ENCODE measurements at regions of chr12 and their contacts with region 1.

Region 1: DNA sequence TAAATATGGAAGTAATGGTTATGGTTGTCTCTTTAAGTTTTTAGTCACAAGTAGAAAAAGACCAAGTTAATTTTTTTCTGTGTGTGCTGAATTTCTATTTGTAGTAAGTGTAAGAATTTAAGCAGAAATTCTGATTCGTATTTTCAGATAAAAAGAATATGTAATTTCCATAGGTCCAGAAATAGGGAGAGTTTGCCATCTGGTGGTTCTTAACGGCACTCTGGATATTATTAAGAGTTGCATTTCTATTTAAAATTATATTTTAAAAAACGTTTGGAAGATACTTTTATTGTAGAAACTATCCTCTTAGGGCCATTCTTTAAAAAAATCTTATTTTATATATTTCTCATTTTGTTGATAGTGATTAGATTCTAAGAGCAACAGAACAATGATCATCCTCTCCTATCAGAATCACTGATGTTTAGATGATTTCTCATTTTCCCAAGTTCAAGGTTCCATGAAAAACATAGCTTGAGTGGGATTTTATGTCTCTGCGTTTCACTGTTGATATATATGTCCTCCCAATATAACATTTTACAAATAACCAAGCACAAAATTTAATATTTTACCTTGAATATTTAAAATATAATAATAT is 88.3 kb downstream of the LRRK2 start:
- DNase-seq: no peak
- CTCF ChIP-seq: peak; percentile 37

Region 2: GRCh38 chr12:40010899-40011774 is 301.9 kb before region 1 on chr12:
- in situ Hi-C with region 1: loop called (anchors 25 kb)
- DNase-seq: peak; percentile 44
- CTCF ChIP-seq: peak; percentile 86

Region 3: GRCh38 chr12:40215977-40216376 is 97.1 kb before region 1 on chr12:
- in situ Hi-C with region 1: no loop called
- DNase-seq: no peak
- CTCF ChIP-seq: no peak

Region 4: GRCh38 chr12:40451661-40452060 is 138.6 kb after region 1 on chr12:
- in situ Hi-C with region 1: no loop called
- DNase-seq: no peak
- CTCF ChIP-seq: no peak

Measured in GM13977 (cell line).